Caco-2 (cell line): ENCODE measurements at regions of chr4 and their contacts with region 1.

Region 1: GRCh38 chr4:5554376-5554775 is 154.0 kb downstream of the EVC2 start:
- DNase-seq: no peak
- H3K4me3 ChIP-seq: no peak overlapping the region
- H3K4me3 Mint-ChIP-seq: no peak overlapping the region
- H3K27ac Mint-ChIP-seq: no peak overlapping the region
- H3K4me1 ChIP-seq: no peaks in the 10 kb centered on the region
- H3K4me1 Mint-ChIP-seq: no peaks in the 10 kb centered on the region
- H3K27me3 ChIP-seq: no peaks in the 10 kb centered on the region
- H3K27me3 Mint-ChIP-seq: peaks cover 7% of the 10 kb centered on the region
- CTCF ChIP-seq: no peak

Region 2: GRCh38 chr4:5307928-5308327 is 246.4 kb before region 1 on chr4:
- CTCF ChIA-PET with region 1: no interaction called
- POLR2A ChIA-PET with region 1: no interaction called
- intact Hi-C with region 1: loop called (anchors 5 kb)
- DNase-seq: no peak
- H3K4me3 ChIP-seq: no peak overlapping the region
- H3K4me3 Mint-ChIP-seq: no peak overlapping the region
- H3K27ac Mint-ChIP-seq: no peak overlapping the region
- H3K4me1 ChIP-seq: no peaks in the 10 kb centered on the region
- H3K4me1 Mint-ChIP-seq: no peaks in the 10 kb centered on the region
- H3K27me3 ChIP-seq: no peaks in the 10 kb centered on the region
- H3K27me3 Mint-ChIP-seq: no peaks in the 10 kb centered on the region
- CTCF ChIP-seq: no peak

Region 3: DNA sequence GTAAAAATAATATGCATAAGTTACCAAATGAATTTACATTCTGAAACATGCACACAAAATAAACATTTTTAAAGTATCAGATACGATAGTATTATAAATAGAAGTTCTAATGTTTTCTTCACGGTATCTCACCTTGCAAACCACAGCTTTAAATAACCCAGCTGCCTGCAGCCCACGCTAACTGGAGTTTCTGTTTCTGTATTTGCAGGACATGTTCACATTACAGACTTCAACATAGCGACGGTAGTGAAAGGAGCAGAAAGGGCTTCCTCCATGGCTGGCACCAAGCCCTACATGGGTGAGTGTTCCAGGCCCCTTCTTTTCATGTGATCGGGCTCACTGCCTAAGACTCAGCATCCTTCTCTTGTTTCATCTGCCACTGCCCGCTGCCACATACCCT is 137.7 kb before region 1 on chr4:
- CTCF ChIA-PET with region 1: no interaction called
- POLR2A ChIA-PET with region 1: no interaction called
- intact Hi-C with region 1: no loop called
- DNase-seq: no peak
- H3K4me3 ChIP-seq: no peak overlapping the region
- H3K4me3 Mint-ChIP-seq: no peak overlapping the region
- H3K27ac Mint-ChIP-seq: no peak overlapping the region
- H3K4me1 ChIP-seq: no peaks in the 10 kb centered on the region
- H3K4me1 Mint-ChIP-seq: no peaks in the 10 kb centered on the region
- H3K27me3 ChIP-seq: no peaks in the 10 kb centered on the region
- H3K27me3 Mint-ChIP-seq: peaks cover 11% of the 10 kb centered on the region
- CTCF ChIP-seq: no peak